Aorta (tissue), 5 donors: ENCODE measurements at regions of chr6 and their contacts with region 1.

Region 1: GRCh38 chr6:112337209-112337638 is 9.9 kb upstream of the RFPL4B start:
- DNase-seq: peak in 1 of 2 donors; percentile 71
- ATAC-seq: peak; percentile 87
- H3K4me3 ChIP-seq: no peak overlapping the region
- H3K27ac ChIP-seq: no peak overlapping the region
- H3K4me1 ChIP-seq: peaks cover 0 to 1% of the 10 kb centered on the region in 2 donors
- H3K27me3 ChIP-seq: no peaks in the 10 kb centered on the region

Region 2: DNA sequence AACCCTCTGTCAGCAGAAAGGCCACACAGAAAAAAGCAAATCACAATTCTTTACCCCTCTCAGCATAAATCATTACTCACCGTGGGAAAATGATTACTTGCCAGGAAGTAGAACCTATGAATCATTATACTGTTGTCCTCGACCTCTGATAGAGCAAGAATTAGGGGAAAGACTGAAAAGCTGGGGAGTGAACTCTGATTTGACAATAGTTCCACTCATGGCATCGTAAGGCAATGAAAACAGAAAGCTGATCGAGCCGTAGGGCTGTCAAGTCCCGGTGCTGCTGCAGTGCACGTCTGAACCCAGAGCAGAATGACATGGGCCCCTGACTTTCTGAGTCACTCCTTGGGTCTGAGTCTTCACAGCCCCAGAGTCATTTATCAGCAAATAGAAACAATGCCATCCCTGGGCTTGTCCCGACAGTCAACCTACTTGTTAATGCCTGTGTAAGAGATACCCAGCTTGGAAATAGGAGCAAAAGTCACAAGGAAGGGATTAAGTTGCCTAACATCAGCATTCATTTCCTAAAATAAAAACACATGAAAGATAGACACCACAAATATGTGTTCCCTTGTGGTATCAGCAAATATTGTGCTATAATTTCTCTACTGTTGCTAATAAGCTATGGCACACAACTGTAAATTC is 1295.1 kb after region 1 on chr6:
- intact Hi-C with region 1: loop called in 1 of 2 experiments (anchors 10 kb)
- DNase-seq: peak in 1 of 2 donors; percentile 71
- ATAC-seq: peak; percentile 70
- H3K4me3 ChIP-seq: peak overlapping the region; percentile 22 to 53
- H3K27ac ChIP-seq: peak overlapping the region in 1 of 2 donors; percentile 71
- H3K4me1 ChIP-seq: peaks cover 1 to 13% of the 10 kb centered on the region in 2 donors
- H3K27me3 ChIP-seq: no peaks in the 10 kb centered on the region